Activated T-helper 1 cell treated with anti-CD3 and anti-CD28 coated beads, Interleukin-12 subunit alpha, Interleukin-12 subunit beta, Interleukin-2, Interleukin-4 antibody, amounts not matched to agents 30 ng/mL and 10 ng/mL and 1 ng/mL, durations not matched to agents 14 hours and 24 hours and 36 hours (primary cell): ENCODE measurements at regions of chr11 and their contacts with region 1.

Region 1: GRCh38 chr11:134050541-134051383 is 18.1 kb upstream of the JAM3 start:
- DNase-seq: peak; percentile 62
- H3K4me3 Mint-ChIP-seq: peak overlapping the region; percentile 13
- H3K27ac Mint-ChIP-seq: no peak overlapping the region
- H3K4me1 Mint-ChIP-seq: peaks cover 6% of the 10 kb centered on the region
- H3K27me3 Mint-ChIP-seq: peaks cover 15% of the 10 kb centered on the region

Region 2: GRCh38 chr11:133834682-133835592 is 215.8 kb before region 1 on chr11:
- intact Hi-C with region 1: loop called (anchors 2 kb)
- DNase-seq: peak; percentile 48
- H3K4me3 Mint-ChIP-seq: no peak overlapping the region
- H3K27ac Mint-ChIP-seq: no peak overlapping the region
- H3K4me1 Mint-ChIP-seq: peaks cover 5% of the 10 kb centered on the region
- H3K27me3 Mint-ChIP-seq: peaks cover 4% of the 10 kb centered on the region

Region 3: DNA sequence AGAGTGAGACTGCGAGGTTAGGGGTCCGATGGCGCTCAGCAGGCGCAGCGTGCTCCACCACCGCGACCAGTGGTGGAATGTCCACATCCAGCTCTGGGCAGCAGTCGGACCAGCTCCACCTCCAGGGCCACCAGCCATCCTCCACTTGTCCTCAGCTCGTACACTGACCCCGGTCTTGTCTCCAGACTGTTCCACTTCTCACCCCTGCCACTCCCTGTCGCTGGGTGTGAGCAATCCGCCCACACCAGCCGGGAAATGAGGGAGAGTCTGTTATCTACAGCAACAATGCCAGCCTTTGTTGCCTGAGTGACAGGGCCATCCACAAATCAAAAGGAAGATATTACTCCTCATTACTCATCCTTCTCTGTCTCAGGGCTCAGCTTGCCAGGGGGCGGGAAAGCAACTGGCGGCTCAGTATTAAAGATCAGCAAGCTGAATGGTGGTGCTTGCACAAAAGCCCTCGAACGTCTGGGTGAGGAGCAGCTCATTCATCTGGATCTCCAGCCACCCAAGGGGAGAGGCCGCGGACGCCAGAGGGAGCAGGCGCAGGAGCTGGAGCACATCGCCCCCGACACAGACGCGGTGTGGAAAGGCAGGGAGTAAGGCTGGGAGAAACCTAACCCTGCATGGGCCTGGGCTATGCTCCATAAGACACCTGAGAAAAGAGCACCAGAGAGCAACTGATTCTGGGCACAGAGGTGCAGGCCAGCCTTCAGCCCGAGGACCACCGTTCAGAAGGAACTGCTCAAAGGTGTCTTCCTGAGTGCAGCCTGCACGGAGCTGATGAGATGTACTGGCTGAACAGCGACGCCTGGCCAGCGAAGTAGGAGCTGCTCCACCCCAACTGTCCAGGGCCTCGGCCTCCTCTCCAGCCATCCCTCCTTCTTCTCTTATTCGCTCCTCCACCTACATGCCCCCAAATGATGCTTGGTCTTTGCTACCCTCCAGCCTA is 115.9 kb before region 1 on chr11:
- intact Hi-C with region 1: no loop called
- DNase-seq: no peak
- H3K4me3 Mint-ChIP-seq: no peak overlapping the region
- H3K27ac Mint-ChIP-seq: no peak overlapping the region
- H3K4me1 Mint-ChIP-seq: peaks cover 35% of the 10 kb centered on the region
- H3K27me3 Mint-ChIP-seq: no peaks in the 10 kb centered on the region

Region 4: DNA sequence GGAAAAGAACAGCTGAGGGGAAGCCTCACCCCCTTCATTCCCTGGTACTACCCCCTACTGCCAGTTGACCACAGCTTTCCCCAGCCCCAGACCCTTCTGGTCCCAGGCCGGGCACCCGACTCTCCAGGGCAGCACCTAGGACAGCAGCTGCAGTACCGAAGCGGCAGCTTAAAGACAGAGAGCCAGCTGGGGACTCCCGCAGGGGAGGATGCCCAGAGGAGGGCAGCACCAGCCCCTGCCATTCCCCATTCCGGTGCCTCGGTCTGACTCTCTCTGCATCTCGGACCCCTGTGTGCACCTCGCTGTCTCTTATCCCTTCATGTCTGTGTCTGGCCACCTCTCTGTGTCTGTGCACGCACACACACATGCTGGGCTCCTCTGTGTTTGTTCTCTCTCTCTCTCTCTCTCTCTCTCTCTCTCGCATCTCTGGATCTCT is 103.4 kb before region 1 on chr11:
- intact Hi-C with region 1: loop called (anchors 1 kb)
- DNase-seq: peak; percentile 63
- H3K4me3 Mint-ChIP-seq: peak overlapping the region; percentile 69
- H3K27ac Mint-ChIP-seq: peak overlapping the region; percentile 83
- H3K4me1 Mint-ChIP-seq: peaks cover 80% of the 10 kb centered on the region
- H3K27me3 Mint-ChIP-seq: no peaks in the 10 kb centered on the region

Region 5: GRCh38 chr11:133966921-133967598 is 83.7 kb before region 1 on chr11:
- intact Hi-C with region 1: no loop called
- DNase-seq: peak; percentile 58
- H3K4me3 Mint-ChIP-seq: peak overlapping the region; percentile 86
- H3K27ac Mint-ChIP-seq: peak overlapping the region; percentile 86
- H3K4me1 Mint-ChIP-seq: peaks cover 15% of the 10 kb centered on the region
- H3K27me3 Mint-ChIP-seq: peaks cover 27% of the 10 kb centered on the region

Region 6: GRCh38 chr11:134068829-134069425 is 18.2 kb after region 1 on chr11 and contains the start of gene JAM3:
- intact Hi-C with region 1: loop called (anchors 1 kb)
- DNase-seq: peak; percentile 97
- H3K4me3 Mint-ChIP-seq: peak within 1 kb of the TSS; percentile 88
- H3K27ac Mint-ChIP-seq: peak within 1 kb of the TSS; percentile 86
- H3K4me1 Mint-ChIP-seq: peaks cover 8% of the 10 kb centered on the region
- H3K27me3 Mint-ChIP-seq: peaks cover 59% of the 10 kb centered on the region
- total RNA-seq, gene JAM3: 3.5 and 3.9 TPM in 2 replicates

Region 7: DNA sequence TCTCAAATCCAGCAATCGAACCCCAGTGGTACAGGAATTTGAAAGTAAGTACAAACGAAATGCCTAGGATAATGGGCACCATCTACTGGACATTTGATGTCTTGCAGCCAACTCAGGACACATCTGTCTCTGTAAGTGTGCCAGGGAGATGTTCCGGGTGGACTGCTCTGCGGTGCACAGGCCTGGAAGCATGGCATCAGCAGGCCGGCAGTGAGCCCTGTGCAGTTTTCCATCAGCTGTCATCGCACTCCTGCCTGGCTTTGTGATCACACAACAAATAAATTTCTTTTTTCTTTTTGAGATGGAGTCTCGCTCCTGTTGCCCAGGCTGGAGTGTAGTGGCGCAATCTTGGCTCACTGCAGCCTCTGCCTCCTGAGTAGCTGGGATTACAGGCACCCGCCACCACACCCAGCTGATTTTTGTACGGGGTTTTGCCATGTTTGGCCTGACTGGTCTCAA is 89.1 kb after region 1 on chr11:
- intact Hi-C with region 1: loop called (anchors 1 kb)
- DNase-seq: peak; percentile 26
- H3K4me3 Mint-ChIP-seq: no peak overlapping the region
- H3K27ac Mint-ChIP-seq: no peak overlapping the region
- H3K4me1 Mint-ChIP-seq: peaks cover 13% of the 10 kb centered on the region
- H3K27me3 Mint-ChIP-seq: no peaks in the 10 kb centered on the region

Region 8: DNA sequence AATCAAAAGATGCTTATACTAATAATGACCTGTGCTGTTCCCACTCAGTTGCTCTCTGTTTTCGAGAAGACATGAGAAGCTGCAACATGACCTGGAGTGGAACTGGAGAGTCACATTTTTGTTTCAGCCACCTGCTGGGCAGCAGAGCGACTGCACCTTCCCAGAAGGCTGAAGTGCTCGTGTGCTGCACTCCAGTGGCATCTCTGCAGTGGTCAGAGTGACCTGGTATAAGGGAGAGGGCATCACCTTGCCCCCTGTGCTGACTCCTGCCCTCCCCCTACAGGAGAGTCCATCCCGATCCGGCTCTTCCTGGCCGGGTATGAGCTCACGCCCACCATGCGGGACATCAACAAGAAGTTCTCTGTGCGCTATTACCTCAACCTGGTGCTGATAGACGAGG is 193.9 kb after region 1 on chr11:
- intact Hi-C with region 1: loop called (anchors 1 kb)
- DNase-seq: no peak
- H3K4me3 Mint-ChIP-seq: no peak overlapping the region
- H3K27ac Mint-ChIP-seq: no peak overlapping the region
- H3K4me1 Mint-ChIP-seq: peaks cover 12% of the 10 kb centered on the region
- H3K27me3 Mint-ChIP-seq: no peaks in the 10 kb centered on the region

Region 9: GRCh38 chr11:134412203-134413042 is 361.7 kb after region 1 on chr11 and contains the start of gene B3GAT1:
- intact Hi-C with region 1: no loop called
- DNase-seq: peak; percentile 9
- H3K4me3 Mint-ChIP-seq: peak within 1 kb of the TSS; percentile 54
- H3K27ac Mint-ChIP-seq: no peak within 1 kb of the TSS
- H3K4me1 Mint-ChIP-seq: peaks cover 6% of the 10 kb centered on the region
- H3K27me3 Mint-ChIP-seq: peaks cover 65% of the 10 kb centered on the region
- total RNA-seq, gene B3GAT1: 0.13 and 0.39 TPM in 2 replicates